Activated CD4-positive, alpha-beta memory T cell treated with anti-CD3 and anti-CD28 coated beads for 36 hours (primary cell): ENCODE measurements at regions of chr19 and their contacts with region 1.

Region 1: GRCh38 chr19:46076951-46077816 is 36.4 kb upstream of the IGFL4 start:
- DNase-seq: peak; percentile 55
- H3K4me3 Mint-ChIP-seq: no peak overlapping the region
- H3K27ac Mint-ChIP-seq: no peak overlapping the region
- H3K4me1 Mint-ChIP-seq: peaks cover 8% of the 10 kb centered on the region
- H3K27me3 Mint-ChIP-seq: peaks cover 77% of the 10 kb centered on the region

Region 2: DNA sequence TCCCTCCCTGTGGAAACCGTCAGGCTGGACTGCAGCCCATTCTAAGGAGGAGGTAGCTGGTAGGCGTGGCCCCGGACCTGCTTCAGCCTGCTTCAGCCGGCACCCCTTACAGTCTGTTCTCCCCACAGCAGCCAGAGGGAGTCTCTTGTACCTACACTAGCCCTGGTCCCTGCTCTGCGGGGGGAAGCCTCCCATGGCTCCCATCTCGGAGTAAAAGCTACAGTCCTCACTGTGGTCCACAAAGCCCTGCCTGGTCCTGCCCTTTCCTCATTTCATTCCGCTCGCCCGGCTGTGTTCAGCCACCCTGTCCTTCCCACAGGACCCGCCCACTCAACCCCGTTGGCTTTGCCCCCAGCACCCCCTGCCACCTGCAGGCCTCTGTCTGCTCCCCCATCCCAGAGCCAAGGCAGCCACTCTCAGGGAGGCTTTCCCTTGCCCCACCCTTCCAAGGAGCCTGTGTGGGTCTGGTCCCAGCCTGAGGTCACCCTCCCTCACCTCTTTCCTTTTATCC is 55.6 kb before region 1 on chr19:
- CTCF ChIA-PET with region 1: interaction called, 71 read pairs
- POLR2A ChIA-PET with region 1: no interaction called
- intact Hi-C with region 1: no loop called
- DNase-seq: no peak
- H3K4me3 Mint-ChIP-seq: no peak overlapping the region
- H3K27ac Mint-ChIP-seq: no peak overlapping the region
- H3K4me1 Mint-ChIP-seq: peaks cover 14% of the 10 kb centered on the region
- H3K27me3 Mint-ChIP-seq: peaks cover 11% of the 10 kb centered on the region

Region 3: DNA sequence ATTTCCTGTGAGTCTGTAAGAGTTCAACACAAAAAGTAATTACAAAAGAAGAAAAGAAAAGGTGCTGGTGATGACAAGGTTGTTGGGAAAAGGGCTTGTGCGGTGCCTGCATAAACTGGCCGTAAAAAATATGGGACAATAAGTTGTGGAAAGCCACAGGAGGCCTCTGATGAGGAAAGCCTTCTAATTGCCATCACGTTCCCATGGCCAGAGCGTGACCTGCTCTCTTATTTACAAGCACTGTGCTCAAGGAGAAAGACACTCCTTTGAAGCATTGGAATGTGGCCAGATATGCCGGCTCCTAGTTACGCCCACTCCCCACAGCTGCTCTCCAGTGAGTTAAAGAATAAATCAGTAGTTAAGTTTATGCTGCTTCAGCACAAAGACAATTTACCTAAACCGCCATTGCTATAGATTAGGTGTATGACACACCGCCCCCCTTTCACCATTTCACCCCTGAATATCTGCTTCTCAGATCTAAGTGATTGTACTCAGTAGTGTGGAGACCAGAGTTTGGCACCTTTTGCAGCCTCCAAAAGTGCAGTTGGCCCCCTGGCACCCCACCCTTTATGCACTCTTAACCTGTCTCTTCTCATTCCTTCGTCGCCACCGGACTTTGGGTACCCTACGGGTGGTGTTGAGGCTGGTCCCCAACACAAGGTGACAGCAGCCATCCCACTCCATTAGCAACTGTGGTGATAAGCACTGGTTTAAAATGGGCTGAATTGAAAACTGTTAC is 46.2 kb before region 1 on chr19:
- CTCF ChIA-PET with region 1: interaction called, 71 read pairs
- POLR2A ChIA-PET with region 1: no interaction called
- intact Hi-C with region 1: loop called (anchors 2 kb)
- DNase-seq: no peak
- H3K4me3 Mint-ChIP-seq: no peak overlapping the region
- H3K27ac Mint-ChIP-seq: no peak overlapping the region
- H3K4me1 Mint-ChIP-seq: peaks cover 10% of the 10 kb centered on the region
- H3K27me3 Mint-ChIP-seq: peaks cover 13% of the 10 kb centered on the region

Region 4: GRCh38 chr19:46115396-46116106 is 38.4 kb after region 1 on chr19:
- CTCF ChIA-PET with region 1: interaction called, 4 read pairs
- POLR2A ChIA-PET with region 1: no interaction called
- intact Hi-C with region 1: loop called (anchors 2 kb)
- DNase-seq: peak; percentile 81
- H3K4me3 Mint-ChIP-seq: no peak overlapping the region
- H3K27ac Mint-ChIP-seq: no peak overlapping the region
- H3K4me1 Mint-ChIP-seq: peaks cover 11% of the 10 kb centered on the region
- H3K27me3 Mint-ChIP-seq: peaks cover 56% of the 10 kb centered on the region

Region 5: GRCh38 chr19:46192992-46193650 is 115.9 kb after region 1 on chr19:
- CTCF ChIA-PET with region 1: interaction called, 81 read pairs
- POLR2A ChIA-PET with region 1: no interaction called
- intact Hi-C with region 1: loop called (anchors 1 kb)
- DNase-seq: peak; percentile 47
- H3K4me3 Mint-ChIP-seq: no peak overlapping the region
- H3K27ac Mint-ChIP-seq: no peak overlapping the region
- H3K4me1 Mint-ChIP-seq: peaks cover 2% of the 10 kb centered on the region
- H3K27me3 Mint-ChIP-seq: peaks cover 57% of the 10 kb centered on the region